Calu3 (cell line): ENCODE measurements at regions of chr12 and their contacts with region 1.

Region 1: DNA sequence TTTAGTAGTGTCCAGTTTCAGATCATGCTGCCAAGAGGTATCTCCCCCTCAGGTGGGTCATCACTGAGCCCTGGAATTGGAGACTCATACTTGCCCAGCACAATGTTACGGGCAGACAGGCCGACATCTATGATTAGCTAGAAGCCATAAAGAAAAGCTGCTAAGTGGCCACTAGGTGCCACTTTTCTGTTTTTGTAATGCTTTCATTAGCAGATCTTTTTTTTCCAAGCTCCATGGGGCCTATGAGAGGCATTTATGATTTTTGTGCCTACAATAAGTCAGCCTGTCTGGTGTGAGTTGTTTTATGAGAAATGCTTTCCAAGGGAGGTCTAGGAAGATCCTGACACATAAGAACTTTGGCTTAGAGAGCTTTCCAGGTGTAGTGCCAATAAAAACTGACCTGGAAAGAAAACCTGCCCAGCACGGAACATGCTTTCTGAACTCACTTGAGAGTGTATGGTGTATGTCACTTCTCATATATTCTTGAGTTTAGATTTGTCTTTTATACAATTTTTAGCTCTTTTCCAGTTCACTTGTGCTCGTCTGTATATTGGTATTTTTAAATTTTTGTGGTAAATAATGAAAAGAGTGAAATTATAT is 21.8 kb upstream of the SMCO2 start:
- DNase-seq: peak; percentile 8
- H3K4me3 Mint-ChIP-seq: no peak overlapping the region
- H3K27ac Mint-ChIP-seq: no peak overlapping the region
- H3K4me1 Mint-ChIP-seq: peaks cover 11% of the 10 kb centered on the region
- H3K27me3 Mint-ChIP-seq: no peaks in the 10 kb centered on the region
- CTCF ChIP-seq: peak; percentile 55

Region 2: DNA sequence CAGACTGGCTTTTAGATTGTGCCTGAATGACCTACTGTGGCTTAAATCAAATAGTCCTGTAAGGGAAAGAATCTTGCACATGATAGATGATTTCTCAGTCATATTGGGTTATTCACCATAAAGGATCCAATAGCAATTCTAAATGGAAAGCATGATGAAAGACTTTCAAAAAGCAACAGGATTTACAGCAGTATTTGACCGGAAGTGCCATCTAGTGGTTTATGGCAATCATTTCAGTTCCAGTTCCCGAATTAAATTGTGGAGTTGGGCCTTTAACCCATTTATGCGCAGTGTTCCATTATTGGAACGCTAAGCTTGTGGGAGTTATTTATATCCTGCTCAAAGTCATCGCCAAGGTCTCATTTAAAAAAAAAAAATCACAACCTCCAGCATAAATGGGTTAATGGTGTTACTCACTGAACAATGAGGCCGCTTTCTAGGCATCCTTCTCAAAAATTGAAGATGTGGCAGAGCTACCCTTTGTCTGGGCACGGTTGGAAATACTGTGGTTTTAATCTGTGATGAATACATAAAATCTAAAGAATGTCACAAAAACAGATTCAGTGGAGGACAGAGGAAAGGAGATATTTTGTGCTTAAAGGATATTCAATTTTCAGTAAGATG is 210.7 kb after region 1 on chr12:
- CTCF ChIA-PET with region 1: interaction called, 3 read pairs
- intact Hi-C with region 1: loop called (anchors 2 kb)
- DNase-seq: peak; percentile 12
- H3K4me3 Mint-ChIP-seq: no peak overlapping the region
- H3K27ac Mint-ChIP-seq: no peak overlapping the region
- H3K4me1 Mint-ChIP-seq: peaks cover 8% of the 10 kb centered on the region
- H3K27me3 Mint-ChIP-seq: no peaks in the 10 kb centered on the region
- CTCF ChIP-seq: peak; percentile 35

Region 3: GRCh38 chr12:27652174-27652763 is 227.5 kb after region 1 on chr12:
- CTCF ChIA-PET with region 1: no interaction called
- intact Hi-C with region 1: loop called (anchors 2 kb)
- DNase-seq: peak; percentile 72
- H3K4me3 Mint-ChIP-seq: no peak overlapping the region
- H3K27ac Mint-ChIP-seq: no peak overlapping the region
- H3K4me1 Mint-ChIP-seq: no peaks in the 10 kb centered on the region
- H3K27me3 Mint-ChIP-seq: no peaks in the 10 kb centered on the region
- CTCF ChIP-seq: peak; percentile 73

Region 4: GRCh38 chr12:27703710-27704452 is 279.1 kb after region 1 on chr12:
- CTCF ChIA-PET with region 1: no interaction called
- intact Hi-C with region 1: loop called (anchors 2 kb)
- DNase-seq: peak; percentile 85
- H3K4me3 Mint-ChIP-seq: no peak overlapping the region
- H3K27ac Mint-ChIP-seq: peak overlapping the region; percentile 80
- H3K4me1 Mint-ChIP-seq: peaks cover 6% of the 10 kb centered on the region
- H3K27me3 Mint-ChIP-seq: no peaks in the 10 kb centered on the region
- CTCF ChIP-seq: peak; percentile 65